Activated CD4-positive, alpha-beta T cell treated with anti-CD3 and anti-CD28 coated beads for 36 hours (primary cell): ENCODE measurements at regions of chr1 and their contacts with region 1.

Region 1: DNA sequence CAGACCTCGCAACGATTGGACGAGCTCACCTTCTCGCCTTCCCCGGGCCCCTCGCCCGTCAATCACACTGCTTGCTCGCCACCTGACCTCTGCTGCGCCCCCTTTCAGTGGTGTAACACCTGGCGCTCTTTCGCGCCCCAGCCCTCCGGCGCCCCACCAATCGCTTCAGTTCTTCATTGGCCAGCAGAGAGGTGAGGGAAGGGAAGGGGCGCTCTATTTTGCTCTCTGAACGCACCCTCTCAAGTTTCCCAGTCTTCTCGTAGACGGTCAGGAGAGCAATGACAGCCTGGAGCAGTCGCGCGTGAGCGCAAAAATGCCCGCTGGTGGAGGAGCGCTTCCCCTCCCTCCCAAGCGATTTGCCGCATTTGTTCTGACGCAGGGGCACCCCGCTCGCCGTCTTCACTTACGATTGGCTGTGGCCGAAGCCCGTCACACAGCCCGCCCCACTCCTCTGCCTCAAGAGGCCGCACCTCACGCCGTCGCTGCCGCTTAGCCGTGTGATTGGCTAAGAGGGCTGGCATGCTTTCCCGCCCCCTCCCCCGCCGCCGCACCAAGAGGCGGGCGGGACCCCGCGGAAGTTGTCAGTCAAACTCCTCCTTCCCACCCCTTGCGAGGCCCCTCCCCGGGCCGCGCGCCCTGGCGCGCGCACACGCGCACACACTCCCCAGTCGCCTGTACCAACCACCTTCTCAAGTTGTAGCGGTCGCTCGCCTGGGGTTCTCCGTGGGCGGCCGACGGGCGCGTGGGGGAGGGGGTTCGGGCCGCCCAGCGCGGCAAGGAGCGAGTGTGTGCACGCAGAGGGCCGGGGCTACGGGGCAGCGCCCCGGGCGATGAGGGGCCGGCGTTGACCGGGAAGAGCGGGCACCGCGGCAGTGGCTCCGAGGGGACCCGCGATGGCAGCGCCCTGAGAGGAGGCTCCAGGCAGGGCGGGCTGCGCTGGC is at the start of gene PPP2R5A:
- DNase-seq: peak; percentile 99
- ATAC-seq: peak; percentile 93
- H3K4me3 Mint-ChIP-seq: peak within 1 kb of the TSS; percentile 92
- H3K27ac Mint-ChIP-seq: peak within 1 kb of the TSS; percentile 96
- H3K4me1 Mint-ChIP-seq: peaks cover 32% of the 10 kb centered on the region
- H3K27me3 Mint-ChIP-seq: no peaks in the 10 kb centered on the region
- total RNA-seq, gene PPP2R5A: 32.3 to 36.1 TPM

Region 2: GRCh38 chr1:211258756-211259637 is 1026.0 kb before region 1 on chr1 and contains the start of gene RCOR3:
- CTCF ChIA-PET with region 1: no interaction called
- POLR2A ChIA-PET with region 1: no interaction called
- intact Hi-C with region 1: loop called in 1 of 2 experiments (anchors 1 kb)
- DNase-seq: peak; percentile 97
- ATAC-seq: peak; percentile 83
- H3K4me3 Mint-ChIP-seq: peak within 1 kb of the TSS; percentile 90
- H3K27ac Mint-ChIP-seq: peak within 1 kb of the TSS; percentile 96
- H3K4me1 Mint-ChIP-seq: peaks cover 13% of the 10 kb centered on the region
- H3K27me3 Mint-ChIP-seq: no peaks in the 10 kb centered on the region
- total RNA-seq, gene RCOR3: 31.0 to 33.4 TPM

Region 3: DNA sequence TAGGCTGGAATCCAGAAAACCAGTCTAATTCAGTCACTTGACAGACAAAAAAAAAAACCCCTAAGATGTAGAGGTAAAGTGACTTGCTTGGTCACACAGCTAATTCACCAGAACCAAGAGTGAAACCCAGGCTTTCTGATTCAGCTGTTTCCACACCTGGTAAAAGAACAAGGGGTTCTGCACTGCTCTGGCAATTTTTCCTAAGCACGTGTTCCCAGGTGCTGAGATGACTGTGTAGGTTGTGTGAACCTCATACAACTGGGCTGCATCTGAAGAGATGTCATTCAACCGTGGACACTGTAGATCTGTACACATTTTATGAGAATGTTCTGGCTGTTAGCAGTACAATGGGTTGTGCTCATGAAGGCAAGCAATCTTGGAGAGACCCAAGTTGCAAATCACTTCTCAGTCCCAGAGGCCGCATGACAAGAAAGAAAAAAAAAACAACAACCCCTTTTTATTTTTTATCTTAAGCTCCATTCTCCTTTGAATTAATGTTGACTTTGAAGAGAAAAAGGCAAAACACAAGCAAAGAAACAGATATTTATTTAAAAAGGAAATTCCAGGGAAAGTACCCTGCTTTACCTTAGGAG is 345.0 kb before region 1 on chr1:
- CTCF ChIA-PET with region 1: no interaction called
- POLR2A ChIA-PET with region 1: no interaction called
- intact Hi-C with region 1: loop called in 1 of 2 experiments (anchors 1 kb)
- DNase-seq: peak; percentile 78
- ATAC-seq: peak; percentile 55
- H3K4me3 Mint-ChIP-seq: no peak overlapping the region
- H3K27ac Mint-ChIP-seq: no peak overlapping the region
- H3K4me1 Mint-ChIP-seq: peaks cover 47% of the 10 kb centered on the region
- H3K27me3 Mint-ChIP-seq: no peaks in the 10 kb centered on the region

Region 4: DNA sequence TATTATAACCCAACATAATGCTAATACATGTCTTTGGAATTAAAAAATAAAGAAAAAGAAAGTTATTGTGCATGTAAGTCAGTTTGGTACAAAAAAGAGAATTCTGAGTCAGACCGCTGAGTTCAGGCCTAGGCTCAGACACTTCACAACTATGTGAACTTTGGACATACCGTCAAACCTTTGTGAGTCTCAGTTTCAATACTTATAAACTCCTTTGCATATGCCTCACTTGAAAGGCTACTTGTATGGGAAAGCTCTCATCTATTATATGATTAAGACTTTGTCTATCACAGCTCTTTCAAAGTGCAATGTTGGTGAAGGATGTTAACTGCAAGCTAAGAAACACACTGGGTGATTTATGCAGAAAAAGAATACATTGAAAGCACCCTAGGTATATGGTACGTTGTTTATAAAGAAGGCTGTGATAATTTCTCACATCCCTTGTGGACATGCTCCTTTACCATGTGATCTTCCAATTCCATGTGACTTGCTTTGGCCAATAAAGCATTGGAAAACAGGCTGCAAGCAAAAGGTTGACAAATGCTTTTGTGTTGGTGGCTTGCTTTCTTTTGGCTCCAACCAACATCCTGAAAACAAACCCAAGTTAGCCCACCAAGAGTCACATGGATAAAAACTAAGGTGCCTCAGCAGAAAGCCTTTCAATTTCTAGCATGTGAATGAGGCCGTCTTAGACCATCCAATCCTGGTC is 299.3 kb before region 1 on chr1:
- CTCF ChIA-PET with region 1: no interaction called
- POLR2A ChIA-PET with region 1: no interaction called
- intact Hi-C with region 1: no loop called
- DNase-seq: no peak
- ATAC-seq: peak; percentile 66
- H3K4me3 Mint-ChIP-seq: no peak overlapping the region
- H3K27ac Mint-ChIP-seq: no peak overlapping the region
- H3K4me1 Mint-ChIP-seq: peaks cover 6% of the 10 kb centered on the region
- H3K27me3 Mint-ChIP-seq: no peaks in the 10 kb centered on the region

Region 5: DNA sequence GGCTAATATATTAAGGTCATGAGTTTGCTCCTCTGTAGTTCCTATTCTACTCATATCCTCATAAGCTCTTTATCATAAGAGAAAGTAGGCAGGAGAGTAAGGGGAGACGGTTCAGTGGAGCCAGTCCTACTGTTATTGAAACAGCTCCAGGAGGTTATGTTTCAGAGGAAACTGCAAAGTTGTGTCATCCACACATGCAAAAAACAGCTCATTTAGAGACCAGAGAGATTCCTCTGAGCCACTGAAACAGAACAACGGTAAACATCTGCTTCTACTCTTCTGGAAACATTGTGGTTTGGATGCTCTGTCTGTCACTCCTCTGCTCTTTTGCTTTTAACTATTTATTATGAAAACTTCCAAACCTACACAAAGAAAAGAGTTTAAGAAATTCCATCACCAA is 66.1 kb before region 1 on chr1:
- CTCF ChIA-PET with region 1: no interaction called
- POLR2A ChIA-PET with region 1: no interaction called
- intact Hi-C with region 1: loop called in 1 of 2 experiments (anchors 1 kb)
- DNase-seq: peak; percentile 36
- ATAC-seq: peak; percentile 97
- H3K4me3 Mint-ChIP-seq: no peak overlapping the region
- H3K27ac Mint-ChIP-seq: no peak overlapping the region
- H3K4me1 Mint-ChIP-seq: peaks cover 22% of the 10 kb centered on the region
- H3K27me3 Mint-ChIP-seq: no peaks in the 10 kb centered on the region

Region 6: DNA sequence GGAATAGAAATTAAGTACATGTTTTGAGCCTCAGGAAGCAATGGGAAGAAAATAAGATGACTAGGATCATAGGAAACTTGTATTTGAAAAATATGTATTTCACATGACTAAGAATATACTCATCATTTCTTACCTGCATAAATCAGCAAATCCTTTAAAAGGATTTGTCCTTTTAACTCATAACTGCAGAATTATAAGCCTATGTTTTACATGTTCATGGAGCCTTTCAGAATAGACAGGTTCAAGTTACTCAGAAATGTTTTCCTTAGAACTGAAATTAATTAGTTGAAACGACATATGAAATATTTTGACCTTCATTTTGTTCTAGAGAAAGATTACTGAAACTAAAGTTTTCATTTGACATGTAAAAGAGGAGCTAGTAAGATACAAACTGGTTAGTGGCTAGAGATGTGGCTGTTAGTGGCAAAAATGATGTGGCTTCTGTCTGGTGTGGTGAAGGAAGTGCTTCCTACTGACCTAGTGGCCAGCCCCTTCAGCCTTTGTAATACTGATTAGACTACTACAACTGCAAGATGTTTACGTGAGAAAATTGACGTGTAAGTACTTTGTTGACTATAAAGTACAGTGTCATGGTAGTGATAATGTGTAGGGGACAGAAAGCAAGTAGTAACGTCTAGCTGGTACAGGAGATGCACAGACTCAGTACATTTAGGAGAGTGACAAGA is 74.9 kb after region 1 on chr1:
- CTCF ChIA-PET with region 1: interaction called, 3 read pairs
- POLR2A ChIA-PET with region 1: no interaction called
- intact Hi-C with region 1: loop called in 1 of 2 experiments (anchors 2 kb)
- DNase-seq: peak; percentile 46
- ATAC-seq: peak; percentile 88
- H3K4me3 Mint-ChIP-seq: no peak overlapping the region
- H3K27ac Mint-ChIP-seq: peak overlapping the region; percentile 90
- H3K4me1 Mint-ChIP-seq: peaks cover 10% of the 10 kb centered on the region
- H3K27me3 Mint-ChIP-seq: no peaks in the 10 kb centered on the region

Region 7: GRCh38 chr1:212558693-212559480 is 273.9 kb after region 1 on chr1:
- CTCF ChIA-PET with region 1: no interaction called
- POLR2A ChIA-PET with region 1: no interaction called
- intact Hi-C with region 1: loop called in 1 of 2 experiments (anchors 2 kb)
- DNase-seq: peak; percentile 95
- ATAC-seq: peak; percentile 90
- H3K4me3 Mint-ChIP-seq: peak overlapping the region; percentile 61
- H3K27ac Mint-ChIP-seq: peak overlapping the region; percentile 95
- H3K4me1 Mint-ChIP-seq: peaks cover 19% of the 10 kb centered on the region
- H3K27me3 Mint-ChIP-seq: peaks cover 14% of the 10 kb centered on the region

Region 8: GRCh38 chr1:213015099-213016050 is 730.4 kb after region 1 on chr1 and contains the start of gene ANGEL2:
- CTCF ChIA-PET with region 1: no interaction called
- POLR2A ChIA-PET with region 1: no interaction called
- intact Hi-C with region 1: loop called in 1 of 2 experiments (anchors 1 kb)
- DNase-seq: peak; percentile 97
- ATAC-seq: peak; percentile 99
- H3K4me3 Mint-ChIP-seq: peak within 1 kb of the TSS; percentile 100
- H3K27ac Mint-ChIP-seq: peak within 1 kb of the TSS; percentile 100
- H3K4me1 Mint-ChIP-seq: peaks cover 30% of the 10 kb centered on the region
- H3K27me3 Mint-ChIP-seq: no peaks in the 10 kb centered on the region
- total RNA-seq, gene ANGEL2: 41.3 to 51.5 TPM